Panc1 (cell line): ENCODE measurements at regions of chr19 and their contacts with region 1.

Region 1: DNA sequence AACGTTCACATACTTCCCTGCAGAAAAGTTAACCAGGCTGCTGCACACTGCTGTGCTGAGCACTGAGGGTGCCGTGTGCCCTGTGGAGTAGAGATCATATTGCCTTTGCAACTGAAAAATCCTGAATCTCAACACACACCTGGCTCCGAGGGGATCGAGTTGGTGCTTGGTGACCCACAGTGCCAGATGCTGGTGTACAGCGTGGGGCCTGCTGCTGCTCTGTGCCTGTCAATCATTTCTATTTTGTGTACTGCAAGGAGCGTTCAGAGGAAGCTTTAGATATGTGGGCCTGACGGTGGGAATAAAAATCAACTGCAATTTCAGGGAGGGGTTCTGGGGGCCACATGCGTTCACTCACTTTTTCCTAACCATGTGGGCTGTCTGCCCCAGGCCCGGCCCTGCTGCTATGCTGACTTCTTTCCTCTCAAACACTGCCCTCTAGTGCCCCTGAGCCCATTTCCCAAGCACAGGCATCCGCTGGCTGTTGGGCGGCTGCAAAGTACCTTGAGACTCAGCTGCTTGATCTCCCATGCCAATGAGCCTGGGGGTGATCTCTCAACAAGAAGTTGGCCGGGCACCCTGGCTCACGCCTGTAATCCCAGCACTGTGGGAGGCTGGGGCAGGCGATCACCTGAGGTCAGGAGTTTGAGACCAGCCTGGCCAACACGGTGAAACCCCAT is 9.7 kb upstream of the LENG8 start:
- DNase-seq: no peak
- ATAC-seq: peak; percentile 84
- H3K4me3 ChIP-seq: no peak overlapping the region
- H3K27ac ChIP-seq: no peak overlapping the region
- H3K4me1 ChIP-seq: no peaks in the 10 kb centered on the region
- H3K27me3 ChIP-seq: no peaks in the 10 kb centered on the region
- CTCF ChIP-seq: peak; percentile 87

Region 2: GRCh38 chr19:54369082-54369687 is 70.1 kb before region 1 on chr19:
- CTCF ChIA-PET with region 1: interaction called, 13 read pairs
- POLR2A ChIA-PET with region 1: no interaction called
- in situ Hi-C with region 1: no loop called
- intact Hi-C with region 1: no loop called
- DNase-seq: no peak
- ATAC-seq: no peak
- H3K4me3 ChIP-seq: no peak overlapping the region
- H3K27ac ChIP-seq: no peak overlapping the region; the same call in 1 of the 2 replicates
- H3K4me1 ChIP-seq: no peaks in the 10 kb centered on the region
- H3K27me3 ChIP-seq: no peaks in the 10 kb centered on the region
- CTCF ChIP-seq: no peak

Region 3: DNA sequence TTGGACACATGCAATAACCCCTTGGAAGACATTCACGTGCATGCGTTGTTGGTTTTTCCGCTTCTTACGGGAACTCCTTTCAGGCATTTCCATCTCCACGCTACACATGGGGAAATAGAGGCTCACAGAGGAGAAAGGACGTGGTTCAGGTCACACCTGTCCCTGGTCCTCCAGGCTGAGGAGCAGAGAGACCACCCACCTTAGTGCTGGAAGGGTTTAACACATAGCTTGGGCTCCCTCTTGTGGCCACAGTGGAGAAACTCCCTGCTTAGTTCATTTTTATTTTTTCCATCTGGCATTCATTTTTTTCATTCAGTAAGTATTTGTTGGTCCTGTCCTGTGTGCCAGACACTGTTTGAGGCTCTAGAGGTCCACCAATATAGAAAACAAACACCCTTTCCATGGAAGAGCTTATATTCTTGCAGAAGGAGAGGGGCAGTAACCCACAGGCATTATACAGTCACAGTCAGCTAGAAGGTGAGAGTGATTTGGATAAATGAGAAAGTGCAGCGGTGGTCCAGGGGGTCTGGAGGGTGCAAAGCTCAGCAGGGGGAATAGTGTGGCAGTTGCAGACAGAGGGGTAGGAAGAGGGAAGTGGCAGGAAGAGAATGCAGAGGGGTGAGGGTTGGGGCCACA is 48.3 kb before region 1 on chr19:
- CTCF ChIA-PET with region 1: no interaction called
- POLR2A ChIA-PET with region 1: no interaction called
- in situ Hi-C with region 1: no loop called
- intact Hi-C with region 1: loop called (anchors 2 kb)
- DNase-seq: peak; percentile 42
- ATAC-seq: peak; percentile 54; the same call in 1 of the 2 replicates
- H3K4me3 ChIP-seq: no peak overlapping the region
- H3K27ac ChIP-seq: no peak overlapping the region
- H3K4me1 ChIP-seq: peaks cover 6% of the 10 kb centered on the region; the same call in 1 of the 2 replicates
- H3K27me3 ChIP-seq: peaks cover 13% of the 10 kb centered on the region
- CTCF ChIP-seq: peak; percentile 95

Region 4: GRCh38 chr19:54573330-54573872 is 134.1 kb after region 1 on chr19 and contains the start of gene LILRA2:
- CTCF ChIA-PET with region 1: no interaction called
- POLR2A ChIA-PET with region 1: no interaction called
- in situ Hi-C with region 1: no loop called
- intact Hi-C with region 1: no loop called
- DNase-seq: no peak
- ATAC-seq: peak; percentile 60; the same call in 1 of the 2 replicates
- H3K4me3 ChIP-seq: no peak within 1 kb of the TSS
- H3K27ac ChIP-seq: no peak within 1 kb of the TSS
- H3K4me1 ChIP-seq: no peaks in the 10 kb centered on the region
- H3K27me3 ChIP-seq: peaks cover 32% of the 10 kb centered on the region
- CTCF ChIP-seq: no peak
- total RNA-seq, gene LILRA2: not detected